Heart right ventricle (tissue), 16 donors: ENCODE measurements at regions of chr4 and their contacts with region 1.

Region 1: GRCh38 chr4:107138433-107138832 is 102.3 kb upstream of the DKK2 start:
- DNase-seq: no peak
- ATAC-seq: no peak
- H3K4me3 ChIP-seq: no peak overlapping the region
- H3K27ac ChIP-seq: no peak overlapping the region
- H3K4me1 ChIP-seq: no peaks in the 10 kb centered on the region
- H3K27me3 ChIP-seq: no peaks in the 10 kb centered on the region
- CTCF ChIP-seq: no peak

Region 2: DNA sequence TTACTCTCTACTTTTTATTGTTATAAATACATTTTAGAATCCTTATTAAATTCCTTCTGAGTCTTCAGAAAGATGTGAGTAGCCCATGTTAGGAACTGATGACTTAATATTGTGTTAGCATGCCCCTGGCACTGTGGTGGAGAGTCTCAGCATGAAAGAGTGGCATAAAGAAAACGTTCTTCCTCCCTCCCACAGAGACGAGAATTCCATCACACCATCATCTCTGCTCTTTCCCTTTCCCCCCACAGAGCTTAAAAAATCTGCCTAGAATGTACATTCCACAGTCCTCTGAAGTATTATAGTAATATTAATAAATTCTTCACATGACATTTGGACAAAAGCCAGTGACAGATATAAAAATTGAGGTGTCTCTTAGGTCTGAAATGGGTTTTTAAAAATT is 15.5 kb after region 1 on chr4:
- intact Hi-C with region 1: loop called in 1 of 10 experiments (anchors 2 kb)
- DNase-seq: no peak
- ATAC-seq: no peak
- H3K4me3 ChIP-seq: no peak overlapping the region
- H3K27ac ChIP-seq: no peak overlapping the region
- H3K4me1 ChIP-seq: no peaks in the 10 kb centered on the region
- H3K27me3 ChIP-seq: no peaks in the 10 kb centered on the region
- CTCF ChIP-seq: no peak